A673 (cell line): ENCODE measurements at regions of chr1 and their contacts with region 1.

Region 1: GRCh38 chr1:108605633-108606032 is 45.7 kb downstream of the EEIG2 start:
- DNase-seq: no peak
- H3K4me3 ChIP-seq: no peak overlapping the region
- H3K27ac ChIP-seq: no peak overlapping the region
- H3K4me1 ChIP-seq: peaks cover 12% of the 10 kb centered on the region
- H3K27me3 ChIP-seq: no peaks in the 10 kb centered on the region
- CTCF ChIP-seq: no peak

Region 2: DNA sequence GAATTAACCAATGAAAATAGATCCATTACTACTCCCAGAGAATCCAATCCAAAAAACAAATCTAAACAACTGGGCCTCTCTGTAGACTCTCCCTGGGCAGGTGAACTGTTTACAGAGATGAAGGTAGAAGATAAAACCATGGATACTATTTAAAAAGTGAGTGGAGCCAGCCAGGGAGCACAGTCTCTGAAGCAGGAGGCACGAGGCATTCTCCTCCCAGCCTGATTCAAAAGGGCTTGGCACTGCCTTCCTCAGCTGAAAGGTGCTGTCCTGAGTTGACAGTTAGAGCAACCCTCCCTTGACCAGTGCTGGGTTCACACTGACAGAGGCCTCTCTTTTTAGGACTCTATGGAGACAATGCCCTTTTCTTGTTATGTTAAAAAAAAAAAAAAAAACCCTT is 18.4 kb after region 1 on chr1:
- CTCF ChIA-PET with region 1: no interaction called
- POLR2A ChIA-PET with region 1: no interaction called
- intact Hi-C with region 1: loop called (anchors 2 kb)
- DNase-seq: no peak
- H3K4me3 ChIP-seq: no peak overlapping the region
- H3K27ac ChIP-seq: no peak overlapping the region
- H3K4me1 ChIP-seq: no peaks in the 10 kb centered on the region
- H3K27me3 ChIP-seq: no peaks in the 10 kb centered on the region
- CTCF ChIP-seq: no peak

Region 3: DNA sequence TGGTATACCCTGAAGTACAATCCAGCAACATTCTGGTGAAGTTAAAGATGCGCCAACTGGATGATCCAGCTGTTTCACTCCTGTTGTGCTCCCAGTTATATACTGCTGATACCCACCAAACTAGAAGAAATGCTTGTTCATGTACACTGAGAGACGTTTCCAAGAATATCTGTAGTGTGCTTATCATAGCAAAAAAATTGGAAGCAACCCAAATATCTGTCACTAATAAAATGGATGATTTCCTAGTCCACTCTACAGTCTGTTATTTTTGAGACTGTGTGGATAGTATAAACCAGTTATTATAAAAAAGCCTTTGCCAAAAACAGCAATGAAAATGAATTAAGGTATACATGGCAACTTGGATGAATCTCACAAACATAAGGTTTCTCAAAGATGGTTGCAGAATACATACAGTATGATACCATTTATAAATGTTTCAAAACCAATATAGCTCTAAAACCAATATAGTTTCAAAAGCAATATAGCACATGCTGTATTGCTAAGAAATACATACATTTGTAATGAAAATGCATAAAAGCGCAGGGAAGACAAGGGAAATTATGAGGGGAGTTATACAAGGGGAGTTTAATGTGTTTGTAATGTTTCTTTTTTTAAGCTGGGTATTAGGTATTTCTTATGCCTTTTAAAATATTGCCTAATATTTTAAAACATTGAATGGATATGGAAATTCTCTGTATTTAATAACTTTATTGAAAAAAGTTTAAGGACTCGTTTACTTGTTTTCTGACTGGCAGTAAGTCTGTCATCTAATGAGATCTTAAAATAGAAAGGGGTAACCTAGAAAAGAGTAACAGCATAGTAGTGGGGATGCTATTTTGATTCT is 307.7 kb after region 1 on chr1:
- CTCF ChIA-PET with region 1: no interaction called
- POLR2A ChIA-PET with region 1: no interaction called
- intact Hi-C with region 1: no loop called
- DNase-seq: peak; percentile 33
- H3K4me3 ChIP-seq: no peak overlapping the region
- H3K27ac ChIP-seq: no peak overlapping the region
- H3K4me1 ChIP-seq: peaks cover 6% of the 10 kb centered on the region
- H3K27me3 ChIP-seq: no peaks in the 10 kb centered on the region
- CTCF ChIP-seq: no peak